CD4-positive, alpha-beta T cell (primary cell): ENCODE measurements at regions of chr2 and their contacts with region 1.

Region 1: DNA sequence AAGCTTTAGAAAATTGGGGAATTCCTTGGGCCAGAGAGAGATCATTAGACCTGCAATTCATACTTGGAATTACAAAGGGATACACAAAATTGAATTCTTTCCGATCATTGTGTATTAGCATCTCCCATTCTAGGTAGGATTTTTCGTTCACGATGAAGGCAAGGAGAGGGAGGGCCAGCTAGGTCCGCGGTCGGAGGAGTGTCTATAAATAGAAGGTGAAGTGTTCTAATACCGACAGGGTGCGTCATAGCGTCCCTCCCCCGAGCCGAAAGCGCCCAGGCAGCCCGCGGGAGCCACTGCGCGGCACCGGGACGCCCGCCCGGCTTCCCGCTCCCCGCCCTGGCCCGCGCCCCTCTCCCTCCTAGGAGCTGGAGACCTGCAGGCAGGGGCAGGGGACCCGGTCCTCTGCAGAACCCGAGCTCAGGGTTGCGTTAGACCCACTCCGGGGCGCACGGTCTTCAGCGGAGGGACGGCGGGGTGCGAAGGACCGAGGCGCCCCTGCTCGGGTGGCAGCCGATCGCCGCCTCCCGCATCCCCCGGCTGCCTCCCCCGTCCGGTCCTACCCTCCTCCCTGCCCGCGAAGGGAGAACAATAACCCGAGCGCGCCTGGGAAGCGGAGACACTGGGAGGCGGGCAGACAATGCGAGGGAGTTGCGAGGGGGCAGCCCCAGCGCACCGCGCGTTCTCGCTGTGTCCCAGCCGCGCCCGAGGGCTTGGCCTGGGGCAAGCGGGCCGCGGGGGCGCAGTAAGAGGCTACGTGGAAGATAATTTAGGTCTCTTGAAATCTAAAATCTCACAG is 114.2 kb upstream of the SERTAD2 start:
- DNase-seq: peak; percentile 36 to 93 (median 62)
- ATAC-seq: peak; percentile 74
- H3K4me3 ChIP-seq: peak overlapping the region; percentile 63
- H3K4me3 Mint-ChIP-seq: peak overlapping the region; percentile 93
- H3K27ac ChIP-seq: peak overlapping the region; percentile 82 to 85
- H3K27ac Mint-ChIP-seq: peak overlapping the region; percentile 81
- H3K4me1 ChIP-seq: peaks cover 6% of the 10 kb centered on the region
- H3K4me1 Mint-ChIP-seq: peaks cover 22% of the 10 kb centered on the region
- H3K27me3 ChIP-seq: no peaks in the 10 kb centered on the region
- H3K27me3 Mint-ChIP-seq: no peaks in the 10 kb centered on the region
- CTCF ChIP-seq: peak; percentile 37

Region 2: GRCh38 chr2:64730551-64731262 is 37.2 kb before region 1 on chr2:
- CTCF ChIA-PET with region 1: no interaction called
- POLR2A ChIA-PET with region 1: interaction called, 8 read pairs
- intact Hi-C with region 1: loop called in 1 of 2 experiments (anchors 5 kb)
- DNase-seq: peak; percentile 12 to 77 (median 36)
- ATAC-seq: peak; percentile 78
- H3K4me3 ChIP-seq: peak overlapping the region; percentile 63
- H3K4me3 Mint-ChIP-seq: peak overlapping the region; percentile 88
- H3K27ac ChIP-seq: peak overlapping the region; percentile 71 to 86
- H3K27ac Mint-ChIP-seq: peak overlapping the region; percentile 98
- H3K4me1 ChIP-seq: peaks cover 22% of the 10 kb centered on the region
- H3K4me1 Mint-ChIP-seq: peaks cover 67% of the 10 kb centered on the region
- H3K27me3 ChIP-seq: no peaks in the 10 kb centered on the region
- H3K27me3 Mint-ChIP-seq: no peaks in the 10 kb centered on the region
- CTCF ChIP-seq: no peak

Region 3: DNA sequence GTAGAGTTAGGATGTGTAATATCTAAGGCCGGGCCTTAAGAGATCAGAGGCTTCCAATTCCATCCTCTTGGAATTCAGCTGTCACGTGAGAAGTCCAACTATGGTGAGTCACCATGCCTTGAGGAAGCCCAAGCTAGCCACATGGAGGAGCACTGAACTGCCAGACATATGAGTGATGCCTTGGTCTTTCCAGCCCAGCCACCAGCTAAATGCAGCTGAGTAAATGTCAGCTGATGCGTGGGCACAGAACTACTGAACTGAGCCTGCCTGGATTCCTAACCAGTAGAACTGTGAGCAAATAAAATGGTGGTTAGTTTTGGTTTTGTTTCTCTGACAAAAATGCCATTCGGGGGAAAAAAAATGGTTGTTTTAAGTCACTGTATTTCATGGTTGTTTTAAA is 39.5 kb after region 1 on chr2:
- CTCF ChIA-PET with region 1: no interaction called
- POLR2A ChIA-PET with region 1: no interaction called
- intact Hi-C with region 1: no loop called
- DNase-seq: peak in 2 of 14 experiments; percentile 42 to 62
- ATAC-seq: no peak
- H3K4me3 ChIP-seq: no peak overlapping the region
- H3K4me3 Mint-ChIP-seq: no peak overlapping the region
- H3K27ac ChIP-seq: no peak overlapping the region
- H3K27ac Mint-ChIP-seq: no peak overlapping the region
- H3K4me1 ChIP-seq: peaks cover 3% of the 10 kb centered on the region
- H3K4me1 Mint-ChIP-seq: peaks cover 8% of the 10 kb centered on the region
- H3K27me3 ChIP-seq: no peaks in the 10 kb centered on the region
- H3K27me3 Mint-ChIP-seq: no peaks in the 10 kb centered on the region
- CTCF ChIP-seq: no peak

Region 4: GRCh38 chr2:64819774-64820696 is 52.2 kb after region 1 on chr2:
- CTCF ChIA-PET with region 1: no interaction called
- POLR2A ChIA-PET with region 1: interaction called, 11 read pairs
- intact Hi-C with region 1: loop called in 1 of 2 experiments (anchors 5 kb)
- DNase-seq: peak; percentile 6 to 84 (median 53)
- ATAC-seq: peak; percentile 97
- H3K4me3 ChIP-seq: peak overlapping the region; percentile 27
- H3K4me3 Mint-ChIP-seq: peak overlapping the region; percentile 63
- H3K27ac ChIP-seq: peak overlapping the region; percentile 53 to 76
- H3K27ac Mint-ChIP-seq: peak overlapping the region; percentile 86
- H3K4me1 ChIP-seq: peaks cover 19% of the 10 kb centered on the region
- H3K4me1 Mint-ChIP-seq: peaks cover 34% of the 10 kb centered on the region
- H3K27me3 ChIP-seq: no peaks in the 10 kb centered on the region
- H3K27me3 Mint-ChIP-seq: no peaks in the 10 kb centered on the region
- CTCF ChIP-seq: no peak

Region 5: GRCh38 chr2:64831134-64831976 is 63.5 kb after region 1 on chr2:
- CTCF ChIA-PET with region 1: interaction called, 4 read pairs
- POLR2A ChIA-PET with region 1: interaction called, 7 read pairs
- intact Hi-C with region 1: loop called (anchors 5 kb)
- DNase-seq: peak; percentile 66 to 93 (median 77)
- ATAC-seq: peak; percentile 87
- H3K4me3 ChIP-seq: peak overlapping the region; percentile 35
- H3K4me3 Mint-ChIP-seq: no peak overlapping the region
- H3K27ac ChIP-seq: no peak overlapping the region
- H3K27ac Mint-ChIP-seq: no peak overlapping the region
- H3K4me1 ChIP-seq: peaks cover 13% of the 10 kb centered on the region
- H3K4me1 Mint-ChIP-seq: peaks cover 5% of the 10 kb centered on the region
- H3K27me3 ChIP-seq: no peaks in the 10 kb centered on the region
- H3K27me3 Mint-ChIP-seq: no peaks in the 10 kb centered on the region
- CTCF ChIP-seq: peak; percentile 93